ENCODE measurements at regions of chr12 and their contacts with region 1.

Region 1: GRCh38 chr12:32727237-32727636 is 28.5 kb downstream of the YARS2 start:
- DNase-seq: no peak
- H3K4me3 ChIP-seq: no peak overlapping the region
- H3K4me3 Mint-ChIP-seq: no peak overlapping the region
- H3K27ac ChIP-seq: no peak overlapping the region
- H3K27ac Mint-ChIP-seq: no peak overlapping the region
- H3K4me1 ChIP-seq: no peaks in the 10 kb centered on the region
- H3K4me1 Mint-ChIP-seq: no peaks in the 10 kb centered on the region
- H3K27me3 ChIP-seq: no peaks in the 10 kb centered on the region
- H3K27me3 Mint-ChIP-seq: no peaks in the 10 kb centered on the region
- CTCF ChIP-seq: no peak

Region 2: GRCh38 chr12:32644431-32644830 is 82.8 kb before region 1 on chr12:
- intact Hi-C with region 1: loop called in 1 of 2 experiments (anchors 10 kb)
- DNase-seq: no peak
- H3K4me3 ChIP-seq: no peak overlapping the region
- H3K4me3 Mint-ChIP-seq: no peak overlapping the region
- H3K27ac ChIP-seq: no peak overlapping the region
- H3K27ac Mint-ChIP-seq: peak overlapping the region in 2 of 7 donors; percentile 7 to 61
- H3K4me1 ChIP-seq: no peaks in the 10 kb centered on the region
- H3K4me1 Mint-ChIP-seq: no peaks in the 10 kb centered on the region
- H3K27me3 ChIP-seq: no peaks in the 10 kb centered on the region
- H3K27me3 Mint-ChIP-seq: peaks cover 0 to 1% (median 0%) of the 10 kb centered on the region in 3 donors
- CTCF ChIP-seq: no peak

Region 3: GRCh38 chr12:32780071-32780470 is 52.8 kb after region 1 on chr12:
- intact Hi-C with region 1: no loop called
- DNase-seq: no peak
- H3K4me3 ChIP-seq: no peak overlapping the region
- H3K4me3 Mint-ChIP-seq: no peak overlapping the region
- H3K27ac ChIP-seq: no peak overlapping the region
- H3K27ac Mint-ChIP-seq: no peak overlapping the region
- H3K4me1 ChIP-seq: no peaks in the 10 kb centered on the region
- H3K4me1 Mint-ChIP-seq: no peaks in the 10 kb centered on the region
- H3K27me3 ChIP-seq: no peaks in the 10 kb centered on the region
- H3K27me3 Mint-ChIP-seq: peaks cover 3 to 14% (median 10%) of the 10 kb centered on the region in 3 donors
- CTCF ChIP-seq: no peak